Activated CD8-positive, alpha-beta T cell treated with anti-CD3 and anti-CD28 coated beads for 36 hours (primary cell): ENCODE measurements at regions of chr9 and their contacts with region 1.

Region 1: GRCh38 chr9:101311758-101312420 is 72.9 kb downstream of the BAAT start:
- DNase-seq: peak; percentile 3
- ATAC-seq: peak; percentile 67
- H3K4me3 Mint-ChIP-seq: no peak overlapping the region
- H3K27ac Mint-ChIP-seq: no peak overlapping the region
- H3K4me1 Mint-ChIP-seq: no peaks in the 10 kb centered on the region
- H3K27me3 Mint-ChIP-seq: peaks cover 4% of the 10 kb centered on the region
- CTCF ChIP-seq: peak; percentile 63

Region 2: GRCh38 chr9:100700689-100701318 is 611.1 kb before region 1 on chr9:
- CTCF ChIA-PET with region 1: interaction called, 13 read pairs
- POLR2A ChIA-PET with region 1: no interaction called
- intact Hi-C with region 1: no loop called
- DNase-seq: peak; percentile 21
- ATAC-seq: no peak
- H3K4me3 Mint-ChIP-seq: no peak overlapping the region
- H3K27ac Mint-ChIP-seq: no peak overlapping the region
- H3K4me1 Mint-ChIP-seq: no peaks in the 10 kb centered on the region
- H3K27me3 Mint-ChIP-seq: no peaks in the 10 kb centered on the region
- CTCF ChIP-seq: peak; percentile 52

Region 3: GRCh38 chr9:100714372-100715099 is 597.4 kb before region 1 on chr9:
- CTCF ChIA-PET with region 1: interaction called, 26 read pairs
- POLR2A ChIA-PET with region 1: no interaction called
- intact Hi-C with region 1: loop called (anchors 5 kb)
- DNase-seq: peak; percentile 64
- ATAC-seq: no peak
- H3K4me3 Mint-ChIP-seq: no peak overlapping the region
- H3K27ac Mint-ChIP-seq: no peak overlapping the region
- H3K4me1 Mint-ChIP-seq: no peaks in the 10 kb centered on the region
- H3K27me3 Mint-ChIP-seq: peaks cover 11% of the 10 kb centered on the region
- CTCF ChIP-seq: peak; percentile 81

Region 4: GRCh38 chr9:101119206-101119819 is 192.6 kb before region 1 on chr9:
- CTCF ChIA-PET with region 1: interaction called, 11 read pairs
- POLR2A ChIA-PET with region 1: no interaction called
- intact Hi-C with region 1: loop called (anchors 10 kb)
- DNase-seq: peak; percentile 44
- ATAC-seq: no peak
- H3K4me3 Mint-ChIP-seq: no peak overlapping the region
- H3K27ac Mint-ChIP-seq: no peak overlapping the region
- H3K4me1 Mint-ChIP-seq: no peaks in the 10 kb centered on the region
- H3K27me3 Mint-ChIP-seq: no peaks in the 10 kb centered on the region
- CTCF ChIP-seq: peak; percentile 22

Region 5: DNA sequence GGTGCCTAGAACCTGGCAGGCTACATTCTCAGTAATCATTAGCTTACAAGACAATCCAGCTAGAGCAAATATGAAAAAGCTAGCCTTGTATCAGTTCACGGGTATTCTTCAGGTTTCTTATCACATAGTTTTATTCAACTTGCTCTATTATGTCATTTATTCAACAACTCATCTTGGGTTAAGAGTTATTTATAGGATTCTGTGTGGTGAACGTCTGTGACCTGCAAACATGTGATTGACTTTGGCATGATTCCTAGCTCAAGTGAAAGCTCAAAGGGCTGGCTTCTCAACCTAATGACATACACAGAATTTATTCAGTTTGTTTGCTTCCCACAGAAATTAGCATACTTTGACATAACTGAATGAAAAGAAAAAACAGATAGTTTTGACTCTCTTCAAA is 110.3 kb before region 1 on chr9:
- CTCF ChIA-PET with region 1: no interaction called
- POLR2A ChIA-PET with region 1: no interaction called
- intact Hi-C with region 1: no loop called
- DNase-seq: no peak
- ATAC-seq: no peak
- H3K4me3 Mint-ChIP-seq: no peak overlapping the region
- H3K27ac Mint-ChIP-seq: no peak overlapping the region
- H3K4me1 Mint-ChIP-seq: no peaks in the 10 kb centered on the region
- H3K27me3 Mint-ChIP-seq: peaks cover 3% of the 10 kb centered on the region
- CTCF ChIP-seq: no peak